Activated T-helper 1 cell treated with anti-CD3 and anti-CD28 coated beads, Interleukin-12 subunit alpha, Interleukin-12 subunit beta, Interleukin-2, Interleukin-4 antibody, amounts not matched to agents 30 ng/mL and 10 ng/mL and 1 ng/mL, durations not matched to agents 14 hours and 24 hours and 36 hours (primary cell): ENCODE measurements at regions of chr2 and their contacts with region 1.

Region 1: DNA sequence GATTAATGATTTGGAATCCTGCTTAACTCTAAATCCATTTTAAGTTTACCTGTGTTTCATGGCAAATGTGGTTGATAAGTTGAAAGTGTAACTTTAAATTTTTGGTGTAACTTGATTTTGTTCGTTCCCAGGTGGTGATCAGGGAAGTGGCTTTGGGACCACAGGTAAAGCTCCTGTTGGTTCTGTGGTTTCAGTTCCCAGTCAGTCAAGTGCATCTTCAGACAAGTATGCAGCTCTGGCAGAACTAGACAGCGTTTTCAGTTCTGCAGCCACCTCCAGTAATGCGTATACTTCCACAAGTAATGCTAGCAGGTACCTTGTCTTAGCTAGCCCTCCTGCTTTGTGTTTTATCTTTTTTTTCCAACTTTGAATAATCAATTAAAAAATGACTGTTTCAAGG is 62.8 kb downstream of the AGFG1 start:
- DNase-seq: no peak
- H3K4me3 Mint-ChIP-seq: no peak overlapping the region
- H3K27ac Mint-ChIP-seq: no peak overlapping the region
- H3K4me1 Mint-ChIP-seq: no peaks in the 10 kb centered on the region
- H3K27me3 Mint-ChIP-seq: no peaks in the 10 kb centered on the region

Region 2: GRCh38 chr2:227324995-227325838 is 209.5 kb before region 1 on chr2 and contains the start of gene MFF:
- intact Hi-C with region 1: loop called (anchors 5 kb)
- DNase-seq: peak; percentile 91
- H3K4me3 Mint-ChIP-seq: peak within 1 kb of the TSS; percentile 94
- H3K27ac Mint-ChIP-seq: peak within 1 kb of the TSS; percentile 94
- H3K4me1 Mint-ChIP-seq: peaks cover 42% of the 10 kb centered on the region
- H3K27me3 Mint-ChIP-seq: peaks cover 14% of the 10 kb centered on the region
- total RNA-seq, gene MFF: 69.9 and 74.9 TPM in 2 replicates

Region 3: DNA sequence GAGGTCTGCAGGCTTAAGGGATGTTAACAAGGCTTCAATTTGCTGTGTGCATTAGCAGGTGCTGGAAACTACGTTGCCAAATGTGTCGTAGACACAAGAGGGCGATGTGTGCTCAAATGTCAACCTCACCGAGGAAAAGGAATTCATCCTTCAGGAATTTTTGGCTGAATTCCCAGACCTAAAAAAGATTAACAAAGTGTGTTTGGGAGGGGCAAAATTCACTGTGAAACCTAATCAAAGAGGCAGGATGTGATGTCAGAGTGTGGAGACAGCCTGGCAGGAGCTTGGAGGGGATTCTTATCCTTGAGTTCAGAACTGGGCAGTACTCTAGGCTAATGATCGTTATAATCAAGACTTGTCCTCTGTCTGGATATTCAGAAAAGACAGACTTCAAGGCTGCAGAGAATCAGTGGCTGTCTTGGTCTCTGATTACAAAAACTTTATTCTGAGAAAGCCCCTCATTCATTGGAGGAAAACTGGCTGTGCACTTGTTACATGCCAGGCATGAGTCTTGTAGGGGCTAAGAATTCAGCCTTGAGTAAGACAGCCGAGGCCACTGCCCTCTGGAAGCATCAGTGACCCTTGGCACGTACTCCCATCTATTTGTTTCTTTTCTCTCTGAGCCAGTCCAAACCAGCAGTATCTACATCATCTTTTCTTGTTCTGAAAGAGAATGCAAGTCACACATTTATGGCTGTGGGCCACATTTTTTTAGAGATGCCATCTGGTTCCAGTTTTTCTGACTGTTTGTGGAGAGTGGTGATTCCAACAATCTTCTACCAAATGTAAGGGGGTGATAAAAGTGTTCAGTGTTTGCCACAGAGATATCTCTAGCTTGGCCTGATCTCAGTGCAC is 128.3 kb before region 1 on chr2:
- intact Hi-C with region 1: loop called (anchors 5 kb)
- DNase-seq: no peak
- H3K4me3 Mint-ChIP-seq: no peak overlapping the region
- H3K27ac Mint-ChIP-seq: peak overlapping the region; percentile 1
- H3K4me1 Mint-ChIP-seq: peaks cover 40% of the 10 kb centered on the region
- H3K27me3 Mint-ChIP-seq: peaks cover 2% of the 10 kb centered on the region

Region 4: DNA sequence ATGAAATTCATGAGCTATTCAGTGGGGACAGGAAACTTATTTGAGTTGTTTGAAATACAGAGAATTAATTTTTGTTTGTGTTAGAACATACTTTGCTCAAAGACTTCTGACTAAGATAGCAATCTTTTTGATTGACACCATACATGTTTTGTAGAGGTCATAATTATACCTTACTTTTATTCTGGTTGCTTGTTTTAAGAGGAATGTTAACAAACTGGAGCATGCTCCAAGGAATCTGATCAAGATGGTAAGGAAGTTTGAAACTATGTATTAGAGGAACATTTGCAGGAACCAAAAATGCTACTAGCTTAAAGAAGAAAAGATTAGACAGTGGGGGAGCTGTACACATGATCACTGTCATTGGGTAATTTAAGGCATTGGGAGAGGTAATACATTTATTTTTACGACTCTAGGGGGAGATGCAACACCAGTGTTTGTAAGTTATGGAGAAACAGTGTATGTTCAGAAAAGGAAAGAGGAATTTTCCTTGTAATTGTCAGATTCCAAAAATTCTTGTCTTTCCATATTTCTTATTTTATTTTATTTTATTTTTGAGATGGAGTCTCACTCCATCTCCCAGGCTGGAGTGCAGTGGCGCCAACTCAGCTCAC is 54.7 kb before region 1 on chr2:
- intact Hi-C with region 1: loop called (anchors 5 kb)
- DNase-seq: no peak
- H3K4me3 Mint-ChIP-seq: peak overlapping the region; percentile 34
- H3K27ac Mint-ChIP-seq: peak overlapping the region; percentile 45
- H3K4me1 Mint-ChIP-seq: peaks cover 64% of the 10 kb centered on the region
- H3K27me3 Mint-ChIP-seq: no peaks in the 10 kb centered on the region

Region 5: DNA sequence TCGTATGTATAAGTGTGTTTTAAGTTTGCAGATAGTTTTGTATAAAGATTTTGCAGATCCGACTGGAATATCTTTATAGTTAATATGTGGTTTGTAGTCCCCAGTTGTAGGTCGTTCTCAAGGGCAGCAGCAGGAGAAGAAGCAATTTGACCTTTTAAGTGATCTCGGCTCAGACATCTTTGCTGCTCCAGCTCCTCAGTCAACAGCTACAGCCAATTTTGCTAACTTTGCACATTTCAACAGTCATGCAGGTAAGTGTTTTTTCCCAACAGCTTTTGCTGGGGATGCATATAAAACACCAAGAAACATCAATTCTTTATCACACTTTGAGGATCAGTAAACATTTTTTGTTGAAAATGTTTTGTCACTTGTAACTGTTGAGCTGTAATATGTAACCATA is 10.0 kb before region 1 on chr2:
- intact Hi-C with region 1: loop called (anchors 2 kb)
- DNase-seq: no peak
- H3K4me3 Mint-ChIP-seq: no peak overlapping the region
- H3K27ac Mint-ChIP-seq: no peak overlapping the region
- H3K4me1 Mint-ChIP-seq: peaks cover 18% of the 10 kb centered on the region
- H3K27me3 Mint-ChIP-seq: no peaks in the 10 kb centered on the region